Ascending aorta (tissue), 2 donors: ENCODE measurements at regions of chr3 and their contacts with region 1.

Region 1: GRCh38 chr3:185282696-185283394 is 29.0 kb upstream of the EHHADH start:
- DNase-seq: peak; percentile 81 to 97
- H3K4me3 ChIP-seq: peak overlapping the region; percentile 59 to 72
- H3K27ac ChIP-seq: no peak overlapping the region
- H3K4me1 ChIP-seq: peaks cover 0 to 9% of the 10 kb centered on the region in 2 donors
- H3K27me3 ChIP-seq: no peaks in the 10 kb centered on the region
- CTCF ChIP-seq: no peak

Region 2: GRCh38 chr3:184314363-184314699 is 968.5 kb before region 1 on chr3 and contains the start of gene EIF4G1:
- intact Hi-C with region 1: loop called (anchors 10 kb)
- DNase-seq: peak; percentile 78 to 96
- H3K4me3 ChIP-seq: peak within 1 kb of the TSS; percentile 76 to 79
- H3K27ac ChIP-seq: peak within 1 kb of the TSS; percentile 95 to 98
- H3K4me1 ChIP-seq: peaks cover 17 to 33% of the 10 kb centered on the region in 2 donors
- H3K27me3 ChIP-seq: no peaks in the 10 kb centered on the region
- CTCF ChIP-seq: no peak
- total RNA-seq, gene EIF4G1: 192 TPM

Region 3: DNA sequence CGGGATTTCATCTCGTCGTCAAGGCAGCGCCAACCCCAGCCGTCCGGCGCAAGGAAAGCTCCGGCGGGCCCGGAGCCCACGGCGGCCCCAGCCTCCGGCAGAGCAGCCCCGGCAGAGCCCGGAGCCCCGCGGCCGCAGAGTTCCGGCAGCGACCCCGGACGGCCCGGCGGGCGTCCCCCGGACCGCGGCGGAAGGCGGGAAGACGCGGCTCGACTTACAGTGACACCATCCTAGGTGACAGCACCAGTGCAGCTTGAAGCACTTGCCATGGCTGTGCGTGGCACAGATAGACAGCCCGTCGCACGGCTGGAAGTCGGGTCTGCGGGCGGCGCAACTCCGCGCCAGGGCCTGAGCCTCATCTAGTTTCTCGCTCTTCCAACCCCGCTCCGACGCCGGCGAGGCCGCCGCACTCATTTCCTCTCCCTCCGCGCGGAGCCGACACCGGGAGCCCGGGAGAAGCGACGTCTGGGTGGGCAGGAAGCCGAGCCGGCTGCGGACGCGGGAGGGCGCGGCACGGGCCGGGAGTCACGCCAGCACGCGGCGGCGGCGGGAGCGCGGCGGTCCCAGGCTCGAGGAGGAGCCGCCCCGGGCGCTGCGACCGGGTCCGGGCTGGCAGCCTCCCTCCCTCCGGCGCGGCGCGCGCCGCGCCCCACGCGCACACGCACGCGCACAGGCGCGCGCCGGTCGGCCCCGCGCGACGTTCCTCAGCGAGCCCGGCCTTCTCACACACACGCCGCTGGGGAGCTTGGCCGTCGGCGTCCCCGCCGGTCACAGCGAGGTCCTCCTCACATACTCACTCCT is 130.2 kb before region 1 on chr3 and contains the start of gene C3orf70:
- intact Hi-C with region 1: loop called (anchors 5 kb)
- DNase-seq: peak in 1 of 2 donors; percentile 80
- H3K4me3 ChIP-seq: peak within 1 kb of the TSS; percentile 59 to 92
- H3K27ac ChIP-seq: peak within 1 kb of the TSS; percentile 88 to 93
- H3K4me1 ChIP-seq: peaks cover 3% of the 10 kb centered on the region in 2 donors
- H3K27me3 ChIP-seq: no peaks in the 10 kb centered on the region
- CTCF ChIP-seq: no peak
- total RNA-seq, gene C3orf70: 16.5 TPM

Region 4: GRCh38 chr3:185498503-185499396 is 215.9 kb after region 1 on chr3 and contains the start of gene TMEM41A:
- intact Hi-C with region 1: loop called (anchors 1 kb)
- DNase-seq: peak; percentile 38 to 95
- H3K4me3 ChIP-seq: peak within 1 kb of the TSS; percentile 78 to 99
- H3K27ac ChIP-seq: peak within 1 kb of the TSS; percentile 76 to 87
- H3K4me1 ChIP-seq: peaks cover 5 to 8% of the 10 kb centered on the region in 2 donors
- H3K27me3 ChIP-seq: no peaks in the 10 kb centered on the region
- CTCF ChIP-seq: no peak
- total RNA-seq, gene TMEM41A: 24.2 TPM

Region 5: DNA sequence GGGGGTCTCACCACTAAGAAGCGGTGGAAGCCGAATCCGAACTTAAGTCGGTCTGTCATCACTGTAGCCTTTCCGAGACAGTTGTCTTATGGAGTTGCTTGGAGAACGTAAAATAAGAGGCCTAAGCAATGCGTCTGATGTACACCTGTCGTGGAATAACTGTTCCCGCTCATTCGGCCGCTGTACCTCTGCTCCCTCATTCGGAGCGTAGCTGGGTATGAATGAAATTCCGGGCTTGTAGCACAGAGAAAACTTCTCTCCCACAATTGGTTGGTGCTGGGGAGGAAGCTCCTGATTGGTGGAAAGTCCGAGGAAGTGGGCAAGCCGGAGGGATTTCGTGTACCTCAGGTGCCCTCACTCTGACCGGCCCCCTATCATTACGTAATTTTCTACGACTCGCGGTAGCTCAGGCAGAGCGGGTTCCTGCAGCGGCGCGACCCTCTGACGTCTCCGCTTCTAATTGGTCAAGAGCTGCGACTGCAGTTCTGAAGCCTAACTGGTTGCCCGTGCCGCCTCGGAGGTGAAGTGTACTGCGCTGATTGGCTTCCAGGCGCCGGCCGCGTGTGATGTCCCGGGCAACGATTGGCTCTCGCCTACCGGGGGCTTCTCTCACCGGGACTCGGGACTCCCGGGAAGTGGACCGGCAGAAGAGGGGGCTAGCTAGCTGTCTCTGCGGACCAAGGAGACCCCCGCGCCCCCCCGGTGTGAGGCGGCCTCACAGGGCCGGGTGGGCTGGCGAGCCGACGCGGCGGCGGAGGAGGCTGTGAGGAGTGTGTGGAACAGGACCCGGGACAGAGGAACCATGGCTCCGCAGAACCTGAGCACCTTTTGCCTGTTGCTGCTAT is 1287.5 kb after region 1 on chr3 and contains the start of gene DNAJB11:
- intact Hi-C with region 1: loop called (anchors 10 kb)
- DNase-seq: peak; percentile 97 to 100
- H3K4me3 ChIP-seq: peak within 1 kb of the TSS; percentile 98 to 99
- H3K27ac ChIP-seq: peak within 1 kb of the TSS; percentile 93 to 97
- H3K4me1 ChIP-seq: peaks cover 0 to 21% of the 10 kb centered on the region in 2 donors
- H3K27me3 ChIP-seq: no peaks in the 10 kb centered on the region
- CTCF ChIP-seq: no peak
- total RNA-seq, gene DNAJB11: 31.3 TPM